Sciatic nerve (tissue), 2 donors: ENCODE measurements at regions of chr5 and their contacts with region 1.

Region 1: DNA sequence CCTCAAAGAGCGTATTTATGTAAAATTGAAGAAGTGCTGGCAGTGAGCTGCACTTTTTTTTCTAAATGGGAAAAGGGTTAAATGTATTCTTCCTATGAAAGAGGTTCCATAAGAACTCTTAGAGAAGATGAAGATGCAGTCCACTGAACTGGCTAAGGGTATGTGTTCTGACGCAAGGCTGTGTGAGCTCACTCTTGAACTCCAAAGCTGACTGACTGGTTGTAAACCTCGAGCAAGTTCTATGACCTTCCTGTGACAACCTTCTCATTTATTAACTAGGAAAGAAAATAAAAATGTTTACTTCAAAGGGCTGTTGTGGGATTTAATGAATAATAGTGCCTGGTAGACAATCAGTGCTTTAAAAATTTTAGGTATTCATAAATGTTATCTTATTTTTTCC is 46.7 kb downstream of the POC5 start:
- DNase-seq: no peak
- ATAC-seq: no peak

Region 2: DNA sequence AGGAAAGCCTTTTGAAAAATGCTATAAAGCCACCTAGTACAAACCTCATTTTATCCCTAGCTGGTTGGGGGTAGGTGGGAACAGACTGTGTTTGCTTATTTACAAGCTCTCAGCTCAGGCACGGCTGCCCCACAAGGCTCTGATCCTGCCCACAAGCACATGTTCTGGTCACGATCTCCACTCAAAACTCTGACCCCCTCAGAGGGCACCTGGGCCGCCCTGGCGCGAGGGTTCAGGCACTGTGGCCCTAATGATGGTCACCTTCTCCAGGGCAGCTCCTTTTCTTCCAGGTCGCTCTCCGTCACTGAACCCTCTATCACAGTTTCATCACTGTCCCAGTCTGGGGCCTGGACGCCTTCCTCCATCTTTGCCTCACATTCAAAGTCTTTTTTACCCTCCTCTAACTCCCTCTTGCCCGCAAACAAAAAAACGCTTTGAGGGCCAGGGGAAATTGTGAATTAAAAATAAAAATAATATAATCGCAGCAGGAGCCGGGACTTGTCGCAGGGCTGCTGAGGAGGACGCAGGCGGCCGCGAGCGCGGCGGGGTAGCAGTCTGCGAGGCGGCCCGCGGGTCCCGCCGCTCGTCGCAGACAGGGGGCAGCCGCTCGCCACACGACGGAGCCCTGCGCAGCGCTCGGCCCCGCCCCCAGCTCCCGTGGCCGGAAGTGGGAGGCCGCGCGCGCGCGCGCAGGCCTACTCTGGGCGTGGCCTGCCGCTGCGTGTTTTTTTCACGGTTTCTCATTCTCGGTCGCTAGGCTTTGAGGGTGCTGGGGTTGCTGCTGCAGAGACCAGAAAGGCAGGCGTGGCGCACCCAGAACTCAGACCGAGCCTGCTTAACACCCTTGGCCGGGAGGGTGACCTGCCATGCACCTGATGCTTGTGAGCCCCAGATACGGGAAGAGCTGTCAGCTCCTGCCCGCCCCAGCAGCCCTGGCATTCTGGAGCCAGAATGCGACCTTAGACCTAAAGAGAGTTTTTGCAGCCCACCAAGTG is 434.0 kb before region 1 on chr5 and contains the start of gene ANKRD31:
- intact Hi-C with region 1: loop called (anchors 10 kb)
- DNase-seq: peak; percentile 93
- ATAC-seq: peak; percentile 100
- total RNA-seq, gene ANKRD31: 0.53 TPM

Region 3: GRCh38 chr5:75603371-75603770 is 67.2 kb before region 1 on chr5:
- intact Hi-C with region 1: loop called (anchors 2 kb)
- DNase-seq: no peak
- ATAC-seq: no peak

Region 4: DNA sequence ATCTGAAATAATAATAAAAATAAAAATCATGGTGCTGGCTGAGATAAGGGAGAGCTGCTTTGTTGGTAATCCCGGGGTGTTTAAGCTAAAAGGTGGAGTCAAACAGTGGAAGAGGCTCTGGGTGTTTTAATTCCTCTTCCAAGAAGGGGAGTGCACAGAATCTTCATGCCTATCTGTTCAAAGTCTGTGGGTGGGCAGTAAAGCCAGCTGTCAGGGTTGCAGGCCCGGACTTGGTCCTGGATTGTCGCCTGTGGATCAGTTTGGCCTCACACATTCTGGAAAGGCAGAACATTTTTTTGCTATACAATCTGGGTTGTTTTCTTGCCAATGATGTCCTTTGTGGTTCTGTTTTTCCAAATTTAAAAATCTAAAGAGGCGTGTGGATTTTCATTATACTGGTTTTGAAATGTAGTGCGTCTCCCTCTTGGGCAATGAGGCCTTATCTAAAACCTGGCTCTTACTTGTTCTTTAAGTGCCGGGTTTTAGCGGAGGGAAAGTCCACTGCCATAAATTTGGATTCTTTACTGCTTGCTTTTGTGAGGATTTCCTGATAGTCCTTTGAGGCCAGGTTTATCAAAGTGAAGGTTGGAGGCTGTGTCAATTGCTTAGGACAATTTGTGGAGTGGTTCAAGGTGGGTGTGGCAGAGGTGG is 53.5 kb before region 1 on chr5:
- intact Hi-C with region 1: no loop called
- DNase-seq: no peak
- ATAC-seq: peak; percentile 40